A673 (cell line): ENCODE measurements at regions of chr12 and their contacts with region 1.

Region 1: GRCh38 chr12:113048716-113049127 is 7.8 kb upstream of the DTX1 start:
- DNase-seq: peak; percentile 75
- H3K4me3 ChIP-seq: no peak overlapping the region
- H3K27ac ChIP-seq: no peak overlapping the region
- H3K4me1 ChIP-seq: no peaks in the 10 kb centered on the region
- H3K27me3 ChIP-seq: peaks cover 2% of the 10 kb centered on the region
- CTCF ChIP-seq: peak; percentile 85

Region 2: DNA sequence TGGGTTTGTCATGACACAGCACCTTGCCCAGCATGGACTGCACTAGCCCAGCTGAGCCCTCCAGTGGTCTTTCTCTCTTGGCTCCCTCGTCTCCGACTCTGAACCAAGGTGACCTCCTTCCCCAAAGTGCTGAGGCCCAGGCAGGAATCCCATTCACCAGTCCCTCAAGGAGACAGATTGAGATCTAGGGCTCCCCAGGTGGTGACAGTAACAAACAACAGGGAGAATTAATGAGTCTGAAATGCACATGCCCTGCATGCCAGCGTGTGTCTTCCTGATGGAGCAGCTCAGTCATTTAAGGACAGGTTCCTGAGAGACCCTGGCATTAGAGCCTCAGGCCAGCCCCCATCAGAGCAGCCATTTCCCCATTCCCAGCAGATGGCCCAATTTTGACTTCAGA is 193.3 kb before region 1 on chr12:
- CTCF ChIA-PET with region 1: no interaction called
- POLR2A ChIA-PET with region 1: no interaction called
- intact Hi-C with region 1: no loop called
- DNase-seq: peak; percentile 63
- H3K4me3 ChIP-seq: no peak overlapping the region
- H3K27ac ChIP-seq: no peak overlapping the region
- H3K4me1 ChIP-seq: peaks cover 7% of the 10 kb centered on the region
- H3K27me3 ChIP-seq: no peaks in the 10 kb centered on the region
- CTCF ChIP-seq: peak; percentile 55

Region 3: DNA sequence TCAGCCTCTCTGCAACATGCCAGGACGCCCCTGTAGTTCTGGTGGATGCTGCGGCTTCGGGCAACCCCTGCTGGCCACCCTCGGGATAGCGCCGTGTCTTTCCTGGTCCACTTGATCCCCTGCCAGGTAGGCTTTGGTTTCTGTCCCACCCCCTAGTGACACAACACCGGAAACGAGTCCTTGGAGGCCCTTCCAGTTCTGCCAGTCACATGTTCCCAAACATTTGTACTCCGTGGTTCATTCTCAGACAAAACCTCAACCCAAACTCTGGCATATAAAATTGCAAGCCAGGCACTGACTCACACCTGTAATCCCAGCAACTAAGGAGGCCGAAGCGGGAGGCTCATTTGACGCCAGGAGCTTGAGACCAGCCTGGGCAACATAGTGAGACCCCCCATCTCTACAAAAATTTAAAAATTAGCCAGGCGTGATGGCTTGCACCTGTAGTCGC is 49.7 kb after region 1 on chr12:
- CTCF ChIA-PET with region 1: interaction called, 4 read pairs
- POLR2A ChIA-PET with region 1: no interaction called
- intact Hi-C with region 1: loop called (anchors 5 kb)
- DNase-seq: peak; percentile 91
- H3K4me3 ChIP-seq: no peak overlapping the region
- H3K27ac ChIP-seq: no peak overlapping the region
- H3K4me1 ChIP-seq: peaks cover 13% of the 10 kb centered on the region
- H3K27me3 ChIP-seq: no peaks in the 10 kb centered on the region
- CTCF ChIP-seq: peak; percentile 92

Region 4: DNA sequence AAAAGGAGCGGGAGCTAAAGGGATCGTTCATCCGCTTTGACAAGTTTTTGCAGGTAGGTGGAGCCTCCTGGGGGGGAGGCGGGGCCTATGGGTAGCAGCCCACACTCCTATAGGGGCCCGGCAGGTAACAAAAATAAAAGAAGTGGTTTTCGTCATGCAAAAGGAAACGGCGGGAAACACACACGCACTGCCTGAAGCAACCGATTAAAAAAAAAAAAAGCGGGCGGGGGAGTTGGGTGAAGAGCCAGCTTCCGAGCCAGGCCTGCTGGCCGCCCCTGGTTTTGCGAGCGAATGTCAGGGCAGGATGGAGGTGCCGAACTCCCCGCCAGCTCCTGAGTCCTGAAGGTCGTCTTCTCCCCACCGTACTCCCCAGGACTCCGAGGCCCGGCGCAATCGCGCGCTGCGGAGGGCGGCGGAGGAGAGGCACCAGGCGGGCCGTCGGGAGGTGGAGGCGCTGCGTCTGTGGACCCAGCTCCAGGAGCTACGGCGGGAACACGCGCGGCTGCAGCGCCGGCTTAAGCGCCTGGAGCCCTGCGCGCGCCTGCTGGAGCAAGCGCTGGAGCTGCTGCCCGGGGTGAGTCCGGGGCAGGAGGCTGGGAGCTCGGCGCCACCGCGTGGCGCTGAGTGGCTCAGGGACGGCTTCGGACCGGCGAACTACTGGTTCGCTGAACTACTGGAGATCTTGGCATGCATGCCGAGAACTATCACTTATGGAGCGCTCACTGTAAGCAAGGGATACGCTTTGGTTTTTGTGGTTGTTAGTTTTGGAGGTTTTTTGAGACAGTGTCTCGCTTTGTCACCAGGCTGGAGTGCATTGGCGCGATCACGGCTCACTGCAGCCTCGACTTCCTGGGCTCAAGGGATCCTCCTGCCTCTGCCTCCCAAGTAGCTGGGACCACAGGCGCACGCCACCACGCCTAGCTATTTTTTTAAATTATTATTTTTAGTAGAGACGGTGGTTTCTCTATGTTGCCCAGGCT is 104.4 kb after region 1 on chr12:
- CTCF ChIA-PET with region 1: no interaction called
- POLR2A ChIA-PET with region 1: no interaction called
- intact Hi-C with region 1: loop called (anchors 5 kb)
- DNase-seq: peak; percentile 82
- H3K4me3 ChIP-seq: peak overlapping the region; percentile 44
- H3K27ac ChIP-seq: no peak overlapping the region
- H3K4me1 ChIP-seq: peaks cover 17% of the 10 kb centered on the region
- H3K27me3 ChIP-seq: peaks cover 5% of the 10 kb centered on the region
- CTCF ChIP-seq: peak; percentile 64

Region 5: GRCh38 chr12:113174461-113175384 is 126.0 kb after region 1 on chr12:
- CTCF ChIA-PET with region 1: interaction called, 11 read pairs
- POLR2A ChIA-PET with region 1: no interaction called
- intact Hi-C with region 1: loop called (anchors 1 kb)
- DNase-seq: peak; percentile 71
- H3K4me3 ChIP-seq: no peak overlapping the region
- H3K27ac ChIP-seq: no peak overlapping the region
- H3K4me1 ChIP-seq: no peaks in the 10 kb centered on the region
- H3K27me3 ChIP-seq: no peaks in the 10 kb centered on the region
- CTCF ChIP-seq: peak; percentile 97

Region 6: DNA sequence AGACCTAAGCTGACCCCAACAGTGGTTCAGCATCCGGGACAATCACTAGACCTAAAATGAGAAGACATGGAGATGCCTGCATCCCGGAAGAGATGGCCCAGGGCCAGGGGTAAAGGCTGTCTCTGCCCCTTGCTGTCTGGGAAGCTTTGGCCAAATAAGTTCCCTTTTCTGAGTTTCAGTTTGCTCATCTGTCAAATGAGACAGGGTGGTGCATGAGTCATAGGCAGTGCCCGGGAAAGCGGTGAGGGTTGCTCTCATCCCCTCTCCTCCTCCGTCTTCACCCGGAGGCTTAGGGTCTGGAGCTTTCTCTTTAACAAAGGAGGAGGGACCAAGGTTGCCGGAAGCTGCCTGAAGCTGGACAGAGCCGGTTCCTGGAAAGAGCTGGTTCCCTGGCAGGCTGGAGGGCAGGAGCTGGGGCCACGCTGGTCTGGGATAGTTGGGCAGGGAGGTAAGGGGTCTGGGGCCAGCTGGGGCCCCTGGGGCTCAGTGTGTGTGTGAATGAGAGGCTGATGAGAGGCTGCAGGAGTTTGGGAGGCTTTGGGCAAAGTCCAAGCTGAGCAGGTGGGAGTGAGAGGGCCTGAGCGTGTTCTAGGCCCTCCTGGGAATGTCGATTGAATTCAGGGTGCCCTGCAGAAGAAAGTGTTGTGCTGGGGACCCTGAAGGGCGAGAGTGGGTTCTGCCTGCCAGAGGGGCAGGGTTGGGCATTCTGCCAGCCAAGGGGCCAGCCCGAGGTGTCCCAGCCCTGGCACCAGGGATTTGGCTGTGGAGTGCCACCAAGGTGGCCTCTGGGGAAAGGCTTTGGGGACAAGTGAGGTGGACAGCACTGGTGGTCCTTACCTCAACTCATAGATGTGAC is 373.5 kb after region 1 on chr12 and contains the start of gene SDSL:
- CTCF ChIA-PET with region 1: no interaction called
- POLR2A ChIA-PET with region 1: no interaction called
- intact Hi-C with region 1: loop called (anchors 10 kb)
- DNase-seq: peak; percentile 54
- H3K4me3 ChIP-seq: peak within 1 kb of the TSS; percentile 26
- H3K27ac ChIP-seq: no peak within 1 kb of the TSS
- H3K4me1 ChIP-seq: no peaks in the 10 kb centered on the region
- H3K27me3 ChIP-seq: no peaks in the 10 kb centered on the region
- CTCF ChIP-seq: no peak
- total RNA-seq, gene SDSL: 0.37 and 1.2 TPM in 2 replicates